Activated B cell treated with CpG ODN at 0.5 μM for 24 hours (primary cell): ENCODE measurements at regions of chr5 and their contacts with region 1.

Region 1: DNA sequence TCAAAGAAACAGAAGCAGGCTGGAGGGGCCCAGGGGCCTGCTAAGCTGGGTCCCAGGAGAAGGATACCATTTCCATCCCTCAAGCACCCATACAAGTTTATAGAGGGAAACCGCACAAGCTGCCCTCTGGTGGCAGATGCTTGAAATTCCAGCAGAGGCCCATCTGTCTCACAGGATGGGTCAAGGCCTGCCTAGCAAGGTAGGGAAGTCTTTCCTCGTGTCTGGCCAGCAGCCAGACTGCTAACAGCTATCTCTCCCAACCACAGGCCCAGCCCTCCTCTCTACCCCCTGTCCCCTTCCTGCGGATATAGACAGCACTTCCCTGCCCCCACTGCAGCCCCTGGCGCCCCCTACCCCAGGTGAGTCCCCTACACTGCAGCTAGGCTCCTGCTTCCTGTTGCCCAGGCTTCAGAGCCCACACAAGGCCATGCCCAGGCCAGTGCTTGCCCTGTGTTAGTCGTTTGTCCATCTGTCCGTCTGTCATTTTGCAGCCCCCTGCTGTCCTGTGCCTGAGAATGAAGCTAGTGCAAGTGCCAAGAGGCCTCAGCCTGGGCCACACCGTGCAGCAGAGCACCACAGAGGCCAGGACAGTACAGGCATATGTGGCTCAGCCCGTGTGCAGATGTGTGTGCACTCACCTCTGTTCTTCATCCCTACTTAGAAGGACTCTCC is 26.2 kb downstream of the TCF7 start:
- DNase-seq: peak; percentile 41
- ATAC-seq: peak; percentile 68
- H3K4me3 Mint-ChIP-seq: no peak overlapping the region
- H3K27ac Mint-ChIP-seq: peak overlapping the region; percentile 68
- H3K4me1 Mint-ChIP-seq: peaks cover 47% of the 10 kb centered on the region
- H3K27me3 Mint-ChIP-seq: no peaks in the 10 kb centered on the region
- CTCF ChIP-seq: peak; percentile 31

Region 2: GRCh38 chr5:133240425-133241091 is 900.1 kb before region 1 on chr5:
- CTCF ChIA-PET with region 1: no interaction called
- POLR2A ChIA-PET with region 1: no interaction called
- intact Hi-C with region 1: no loop called
- DNase-seq: no peak
- ATAC-seq: peak; percentile 31
- H3K4me3 Mint-ChIP-seq: no peak overlapping the region
- H3K27ac Mint-ChIP-seq: no peak overlapping the region
- H3K4me1 Mint-ChIP-seq: no peaks in the 10 kb centered on the region
- H3K27me3 Mint-ChIP-seq: no peaks in the 10 kb centered on the region
- CTCF ChIP-seq: no peak

Region 3: GRCh38 chr5:133861161-133861737 is 279.4 kb before region 1 on chr5:
- CTCF ChIA-PET with region 1: no interaction called
- POLR2A ChIA-PET with region 1: no interaction called
- intact Hi-C with region 1: no loop called
- DNase-seq: no peak
- ATAC-seq: peak; percentile 98
- H3K4me3 Mint-ChIP-seq: no peak overlapping the region
- H3K27ac Mint-ChIP-seq: no peak overlapping the region
- H3K4me1 Mint-ChIP-seq: peaks cover 11% of the 10 kb centered on the region
- H3K27me3 Mint-ChIP-seq: no peaks in the 10 kb centered on the region
- CTCF ChIP-seq: no peak

Region 4: GRCh38 chr5:134026521-134027268 is 114.0 kb before region 1 on chr5:
- CTCF ChIA-PET with region 1: interaction called, 12 read pairs
- POLR2A ChIA-PET with region 1: no interaction called
- intact Hi-C with region 1: no loop called
- DNase-seq: no peak
- ATAC-seq: peak; percentile 84
- H3K4me3 Mint-ChIP-seq: no peak overlapping the region
- H3K27ac Mint-ChIP-seq: no peak overlapping the region
- H3K4me1 Mint-ChIP-seq: peaks cover 19% of the 10 kb centered on the region
- H3K27me3 Mint-ChIP-seq: no peaks in the 10 kb centered on the region
- CTCF ChIP-seq: no peak

Region 5: GRCh38 chr5:134070725-134071613 is 69.7 kb before region 1 on chr5:
- CTCF ChIA-PET with region 1: interaction called, 5 read pairs
- POLR2A ChIA-PET with region 1: no interaction called
- intact Hi-C with region 1: loop called (anchors 1 kb)
- DNase-seq: no peak
- ATAC-seq: peak; percentile 40
- H3K4me3 Mint-ChIP-seq: peak overlapping the region; percentile 72
- H3K27ac Mint-ChIP-seq: no peak overlapping the region
- H3K4me1 Mint-ChIP-seq: peaks cover 9% of the 10 kb centered on the region
- H3K27me3 Mint-ChIP-seq: peaks cover 22% of the 10 kb centered on the region
- CTCF ChIP-seq: no peak

Region 6: DNA sequence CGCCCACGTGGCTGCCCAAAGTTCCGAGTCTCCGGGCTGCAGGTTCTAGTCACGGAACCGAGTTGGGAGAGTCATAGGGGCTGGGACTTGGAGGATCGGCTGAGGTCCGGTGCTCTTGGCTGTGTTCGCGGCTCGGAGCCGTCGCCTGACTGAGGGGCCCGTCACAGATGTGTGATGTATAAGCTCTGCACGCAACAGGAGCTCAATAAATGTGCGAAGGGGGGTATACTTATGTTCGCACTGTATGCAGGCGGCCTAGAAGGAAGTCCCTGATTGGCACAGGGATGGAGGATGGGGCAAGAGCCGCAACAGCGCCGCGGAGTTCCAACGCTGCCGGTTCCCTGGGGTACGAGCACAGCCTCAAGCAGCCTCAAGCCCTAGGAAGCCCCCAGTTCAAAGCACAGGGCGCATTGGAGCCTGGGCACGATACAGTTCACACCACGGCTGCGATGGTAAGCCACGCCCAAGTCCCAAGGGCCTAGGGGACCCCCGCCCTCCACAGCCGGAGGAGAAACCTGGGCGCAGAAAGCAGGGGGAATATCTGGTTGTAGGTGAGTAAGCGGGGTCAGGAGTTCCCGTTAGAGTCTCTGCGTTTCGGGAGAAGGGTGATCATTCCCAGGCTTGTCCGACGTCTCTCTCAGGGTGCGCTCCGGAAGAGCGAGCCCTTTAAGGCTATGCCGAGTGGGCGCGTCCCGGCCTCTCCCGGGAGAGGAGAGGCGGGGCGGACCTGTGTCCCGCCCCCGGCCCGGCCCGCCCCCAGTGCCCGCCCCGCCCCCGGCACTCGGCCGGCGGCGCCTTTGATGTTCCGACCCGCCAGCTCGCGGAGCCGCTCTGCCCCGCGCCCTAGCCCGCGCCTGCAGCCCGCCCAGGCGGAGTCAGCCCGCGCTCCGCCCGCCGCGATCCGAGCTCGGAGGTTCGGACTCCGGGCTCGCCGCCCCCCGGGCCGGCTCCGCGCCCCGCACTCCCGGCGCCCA is 26.5 kb before region 1 on chr5 and contains the start of gene TCF7:
- CTCF ChIA-PET with region 1: interaction called, 32 read pairs
- POLR2A ChIA-PET with region 1: interaction called, 3 read pairs
- intact Hi-C with region 1: loop called (anchors 1 kb)
- DNase-seq: peak; percentile 61
- ATAC-seq: peak; percentile 91
- H3K4me3 Mint-ChIP-seq: peak within 1 kb of the TSS; percentile 90
- H3K27ac Mint-ChIP-seq: peak within 1 kb of the TSS; percentile 81
- H3K4me1 Mint-ChIP-seq: peaks cover 24% of the 10 kb centered on the region
- H3K27me3 Mint-ChIP-seq: peaks cover 10% of the 10 kb centered on the region
- CTCF ChIP-seq: no peak
- total RNA-seq, gene TCF7: 13.2 and 15.8 TPM in 2 replicates

Region 7: DNA sequence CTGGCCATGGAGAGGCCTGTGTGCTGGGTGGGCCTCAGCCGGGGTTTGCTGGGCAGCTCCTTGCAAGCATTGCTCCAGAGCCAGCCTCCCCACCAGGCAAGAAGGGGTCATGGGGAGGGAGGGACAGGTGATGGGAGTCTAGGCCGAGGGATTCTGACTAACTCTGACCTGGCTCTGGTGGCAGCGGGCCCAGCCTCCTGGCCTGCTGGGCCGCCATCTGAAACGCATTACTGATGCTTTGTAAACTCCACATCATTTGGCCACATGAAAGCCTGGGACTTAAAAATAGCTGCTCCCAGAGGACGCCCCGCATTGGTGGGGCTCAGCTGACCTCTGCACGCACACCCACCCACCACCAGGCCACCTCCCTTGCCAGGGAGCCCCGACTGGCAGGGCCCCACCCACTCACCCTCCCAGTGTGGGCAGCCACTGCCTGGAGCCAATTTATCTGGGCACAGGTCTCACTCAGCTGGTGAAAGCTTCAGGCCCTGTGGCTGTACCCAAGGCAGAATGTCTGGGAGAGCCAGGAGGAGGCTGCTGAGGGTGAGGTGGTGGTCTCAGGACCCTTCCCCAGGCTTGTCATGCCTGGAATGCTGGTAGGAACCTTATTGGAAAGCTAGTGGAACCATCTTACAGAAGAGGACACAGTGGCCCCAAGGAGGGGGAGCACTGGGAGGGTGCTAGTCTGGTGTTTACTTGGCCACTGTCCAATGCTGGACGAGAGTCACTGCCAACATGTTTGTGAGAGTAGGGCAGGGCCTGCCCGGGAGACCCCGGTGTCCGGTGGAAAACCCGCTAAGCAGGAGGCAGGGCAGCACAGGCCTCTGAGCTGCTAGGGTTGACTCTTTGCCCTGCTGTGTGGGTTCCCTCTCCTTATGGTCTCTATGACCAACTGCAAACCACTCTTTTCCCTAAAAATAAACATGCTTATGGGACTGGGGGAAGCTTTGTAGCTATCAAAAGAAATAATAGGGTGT is 15.3 kb before region 1 on chr5:
- CTCF ChIA-PET with region 1: interaction called, 24 read pairs
- POLR2A ChIA-PET with region 1: interaction called, 3 read pairs
- intact Hi-C with region 1: loop called (anchors 2 kb)
- DNase-seq: no peak
- ATAC-seq: peak; percentile 15
- H3K4me3 Mint-ChIP-seq: no peak overlapping the region
- H3K27ac Mint-ChIP-seq: no peak overlapping the region
- H3K4me1 Mint-ChIP-seq: peaks cover 62% of the 10 kb centered on the region
- H3K27me3 Mint-ChIP-seq: no peaks in the 10 kb centered on the region
- CTCF ChIP-seq: no peak